Heart right ventricle (tissue), 16 donors: ENCODE measurements at regions of chr13 and their contacts with region 1.

Region 1: DNA sequence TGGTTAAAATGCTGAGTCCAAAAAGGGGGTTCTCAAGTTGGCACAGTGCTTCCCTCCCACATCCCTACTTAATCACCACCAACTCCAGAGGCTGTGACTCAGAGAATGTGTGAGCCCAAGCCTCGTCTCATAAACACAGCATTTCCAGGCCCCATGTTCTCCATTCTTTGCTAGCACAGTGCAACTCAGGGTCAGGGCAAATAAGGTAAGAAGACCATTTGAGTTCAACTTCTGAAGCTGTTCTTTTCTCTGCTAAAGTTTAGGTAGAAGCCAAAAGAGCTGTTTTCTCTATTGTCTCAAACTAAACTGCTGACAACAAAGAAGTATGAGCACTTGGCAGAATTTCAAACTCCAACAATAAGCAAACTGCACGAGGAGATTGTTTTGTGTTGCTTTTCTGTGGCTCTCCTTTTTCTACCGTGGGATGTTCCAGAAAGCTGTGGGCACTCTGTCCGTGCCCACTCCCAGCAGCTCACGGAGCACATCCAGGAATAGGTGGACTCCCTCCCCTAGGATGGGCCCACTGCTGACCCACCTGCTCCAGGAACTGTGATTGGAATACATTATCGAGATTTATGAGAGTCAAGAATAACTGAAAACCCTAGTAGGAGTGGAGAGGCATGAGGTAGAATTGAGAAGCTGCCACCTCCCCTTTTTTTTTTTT is 494.3 kb downstream of the COG6 start:
- DNase-seq: peak in 1 of 2 donors; percentile 47
- ATAC-seq: peak; percentile 78 to 91 (median 82)
- H3K4me3 ChIP-seq: no peak overlapping the region
- H3K27ac ChIP-seq: peak overlapping the region in 9 of 10 donors; percentile 2 to 76 (median 38)
- H3K4me1 ChIP-seq: peaks cover 0 to 35% (median 20%) of the 10 kb centered on the region in 9 donors
- H3K27me3 ChIP-seq: no peaks in the 10 kb centered on the region
- CTCF ChIP-seq: no peak

Region 2: DNA sequence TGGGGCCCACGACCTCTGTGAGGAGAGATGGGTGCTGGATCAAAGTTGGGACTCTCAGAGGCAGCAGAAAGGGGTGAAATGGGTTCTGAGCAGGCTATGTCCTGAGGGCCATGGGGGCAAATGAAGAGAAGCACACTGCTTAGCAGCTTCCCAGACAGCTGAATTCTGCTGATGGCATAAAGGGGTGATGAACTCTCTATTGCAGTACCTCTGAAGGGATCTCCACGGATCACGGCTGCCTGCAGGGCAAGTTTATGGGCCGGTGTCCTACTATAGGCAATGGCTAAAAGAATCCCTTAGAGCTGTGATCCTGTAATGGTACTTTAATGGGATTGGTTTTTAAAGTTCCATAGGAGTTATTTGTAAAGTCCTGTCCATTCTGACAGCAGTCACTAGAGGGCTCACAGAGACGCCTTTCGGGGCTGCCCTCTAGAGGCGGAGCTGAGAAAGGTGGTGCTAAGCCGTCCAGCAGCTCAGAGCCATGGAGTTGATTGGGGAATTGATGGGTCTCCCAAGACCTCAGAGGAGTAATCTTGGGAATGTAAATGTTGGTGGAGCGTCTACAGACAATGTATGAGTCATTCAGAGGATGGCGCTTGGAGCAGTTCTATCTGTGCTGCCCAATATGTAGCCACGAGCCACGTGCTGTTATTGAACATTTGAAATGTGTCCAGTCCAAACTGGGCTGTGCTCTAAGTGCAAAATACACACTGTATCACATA is 207.0 kb before region 1 on chr13:
- intact Hi-C with region 1: no loop called
- DNase-seq: peak; percentile 61 to 62
- ATAC-seq: peak; percentile 86 to 93 (median 90)
- H3K4me3 ChIP-seq: no peak overlapping the region
- H3K27ac ChIP-seq: peak overlapping the region in 2 of 10 donors; percentile 8 to 12
- H3K4me1 ChIP-seq: peaks cover 0 to 13% (median 0%) of the 10 kb centered on the region in 9 donors
- H3K27me3 ChIP-seq: no peaks in the 10 kb centered on the region
- CTCF ChIP-seq: peak; percentile 78 to 98 (median 88)

Region 3: DNA sequence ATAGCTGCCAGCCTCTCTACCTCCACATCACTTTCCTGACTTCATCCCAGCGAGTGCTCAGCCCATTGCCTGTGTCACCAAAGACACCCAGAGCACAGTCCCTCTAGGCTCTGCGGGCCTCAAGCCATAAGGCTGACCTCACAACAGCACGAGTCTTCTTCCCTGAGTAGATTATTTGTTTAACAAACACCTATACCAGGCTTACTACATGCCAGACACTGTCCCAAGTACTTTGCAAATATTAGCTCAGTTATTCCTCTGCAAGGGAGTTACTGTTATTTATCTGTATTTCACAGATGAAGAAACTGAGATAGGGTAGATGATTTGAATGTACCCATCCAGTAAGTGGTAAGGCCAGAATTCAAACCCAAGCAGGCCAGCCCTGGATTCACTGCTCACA is 10.0 kb after region 1 on chr13:
- intact Hi-C with region 1: loop called in 1 of 10 experiments (anchors 1 kb)
- DNase-seq: no peak
- ATAC-seq: no peak
- H3K4me3 ChIP-seq: no peak overlapping the region
- H3K27ac ChIP-seq: no peak overlapping the region
- H3K4me1 ChIP-seq: peaks cover 0 to 12% (median 0%) of the 10 kb centered on the region in 9 donors
- H3K27me3 ChIP-seq: no peaks in the 10 kb centered on the region
- CTCF ChIP-seq: no peak

Region 4: GRCh38 chr13:40190641-40191100 is 40.9 kb after region 1 on chr13:
- intact Hi-C with region 1: loop called in 2 of 10 experiments (anchors 5 kb)
- DNase-seq: no peak
- ATAC-seq: peak; percentile 42 to 64 (median 56)
- H3K4me3 ChIP-seq: no peak overlapping the region
- H3K27ac ChIP-seq: peak overlapping the region; percentile 32 to 89 (median 78)
- H3K4me1 ChIP-seq: peaks cover 20 to 55% (median 42%) of the 10 kb centered on the region in 9 donors
- H3K27me3 ChIP-seq: no peaks in the 10 kb centered on the region
- CTCF ChIP-seq: no peak